GM10248 (cell line): ENCODE measurements at regions of chr7 and their contacts with region 1.

Region 1: DNA sequence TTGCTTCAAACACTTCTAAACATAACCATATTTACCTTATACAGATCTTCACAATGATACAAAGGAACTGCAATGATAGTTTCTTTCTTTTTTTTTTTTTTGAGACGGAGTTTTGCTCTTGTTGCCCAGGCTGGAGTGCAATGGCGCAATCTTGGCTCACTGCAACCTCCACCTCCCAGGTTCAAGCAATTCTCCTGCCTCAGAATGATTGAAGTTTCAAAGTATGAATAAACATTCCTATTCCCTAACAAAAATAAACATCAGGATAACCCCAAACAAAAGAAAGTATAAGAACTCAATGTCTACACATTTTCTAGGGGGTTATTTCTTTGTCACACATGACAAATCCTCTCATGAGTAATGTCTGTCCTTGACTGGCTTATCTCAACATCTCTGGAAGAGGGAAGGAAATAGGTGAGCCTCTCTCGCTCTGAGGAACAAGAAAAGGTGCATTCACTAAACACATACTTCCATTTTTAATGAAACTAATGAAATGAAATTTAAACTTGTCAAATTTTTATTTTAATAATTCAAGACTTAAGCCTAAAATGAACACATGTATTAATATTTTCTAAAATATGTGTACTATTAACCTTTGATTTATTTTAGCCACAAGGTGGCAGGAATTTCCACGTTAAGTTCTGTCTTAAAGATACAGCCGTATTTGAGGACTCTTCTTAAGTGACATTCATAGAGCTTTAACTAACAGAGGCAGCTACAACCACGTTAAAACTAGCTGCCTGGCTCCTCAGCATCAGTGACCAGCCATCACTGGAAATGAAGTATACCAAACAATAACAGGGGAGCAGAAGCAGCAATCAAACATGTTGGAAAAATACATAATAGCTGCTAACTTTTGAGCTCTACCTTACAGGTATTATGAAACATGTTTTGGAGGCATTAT is 58.3 kb downstream of the MALSU1 start:
- DNase-seq: peak; percentile 36
- CTCF ChIP-seq: peak; percentile 47

Region 2: DNA sequence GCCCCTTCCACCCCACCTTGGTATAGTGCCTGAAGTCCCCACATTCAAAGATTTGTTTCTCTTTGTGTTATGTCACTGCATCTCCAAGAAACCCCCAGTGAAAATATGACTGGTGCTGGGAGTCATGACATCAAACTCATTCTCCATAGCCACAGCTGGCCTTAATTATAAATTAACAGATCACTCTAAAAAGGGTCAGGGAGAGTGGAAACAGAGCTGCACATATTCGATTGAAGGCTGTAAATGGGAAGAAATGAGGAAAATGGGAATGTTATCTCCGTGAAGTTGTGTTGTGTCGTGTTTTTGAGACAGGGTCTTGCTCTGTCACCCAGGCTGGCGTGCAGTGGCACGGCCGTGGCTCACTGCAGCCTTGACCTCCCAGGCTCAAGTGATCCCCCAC is 199.8 kb before region 1 on chr7:
- CTCF ChIA-PET with region 1: no interaction called
- POLR2A ChIA-PET with region 1: no interaction called
- DNase-seq: no peak
- CTCF ChIP-seq: no peak

Region 3: DNA sequence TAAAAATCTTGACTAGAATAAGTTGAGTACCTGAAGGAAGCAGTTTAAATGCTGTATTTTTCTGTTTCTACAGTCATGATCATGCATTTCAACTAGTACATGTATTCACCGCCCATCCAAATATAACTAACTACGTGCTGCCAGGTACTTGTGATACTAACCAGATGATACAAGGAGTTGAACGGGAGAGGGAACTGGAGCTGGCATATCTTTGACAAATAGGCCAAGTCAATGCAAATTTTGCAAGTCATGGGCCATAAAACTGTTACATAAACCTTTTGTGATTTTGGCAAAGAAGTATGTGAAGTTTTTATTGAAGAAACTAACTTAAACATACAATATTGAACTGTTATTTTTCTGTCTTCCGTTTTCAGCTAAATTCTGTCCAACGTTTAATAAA is 161.1 kb before region 1 on chr7:
- CTCF ChIA-PET with region 1: no interaction called
- POLR2A ChIA-PET with region 1: no interaction called
- DNase-seq: no peak
- CTCF ChIP-seq: no peak

Region 4: DNA sequence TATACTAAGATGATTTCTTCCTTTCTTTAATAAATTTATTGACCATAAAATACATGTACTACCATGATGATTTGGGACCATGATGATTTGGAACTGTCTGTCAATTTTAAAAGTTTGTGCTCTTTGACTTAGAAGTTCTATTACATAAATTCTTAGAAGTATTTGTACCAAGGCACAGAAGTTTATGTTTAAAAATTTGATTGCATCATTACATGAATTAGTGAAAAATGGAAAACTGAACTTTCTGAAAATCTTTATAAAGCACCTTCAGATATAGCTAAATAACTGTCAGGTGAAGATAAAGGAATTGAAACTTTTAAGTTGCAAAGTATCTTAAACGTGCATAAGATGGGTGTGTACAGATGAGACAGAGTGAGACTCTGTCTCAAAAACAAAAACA is 26.3 kb before region 1 on chr7:
- CTCF ChIA-PET with region 1: no interaction called
- POLR2A ChIA-PET with region 1: no interaction called
- DNase-seq: no peak
- CTCF ChIP-seq: no peak

Region 5: DNA sequence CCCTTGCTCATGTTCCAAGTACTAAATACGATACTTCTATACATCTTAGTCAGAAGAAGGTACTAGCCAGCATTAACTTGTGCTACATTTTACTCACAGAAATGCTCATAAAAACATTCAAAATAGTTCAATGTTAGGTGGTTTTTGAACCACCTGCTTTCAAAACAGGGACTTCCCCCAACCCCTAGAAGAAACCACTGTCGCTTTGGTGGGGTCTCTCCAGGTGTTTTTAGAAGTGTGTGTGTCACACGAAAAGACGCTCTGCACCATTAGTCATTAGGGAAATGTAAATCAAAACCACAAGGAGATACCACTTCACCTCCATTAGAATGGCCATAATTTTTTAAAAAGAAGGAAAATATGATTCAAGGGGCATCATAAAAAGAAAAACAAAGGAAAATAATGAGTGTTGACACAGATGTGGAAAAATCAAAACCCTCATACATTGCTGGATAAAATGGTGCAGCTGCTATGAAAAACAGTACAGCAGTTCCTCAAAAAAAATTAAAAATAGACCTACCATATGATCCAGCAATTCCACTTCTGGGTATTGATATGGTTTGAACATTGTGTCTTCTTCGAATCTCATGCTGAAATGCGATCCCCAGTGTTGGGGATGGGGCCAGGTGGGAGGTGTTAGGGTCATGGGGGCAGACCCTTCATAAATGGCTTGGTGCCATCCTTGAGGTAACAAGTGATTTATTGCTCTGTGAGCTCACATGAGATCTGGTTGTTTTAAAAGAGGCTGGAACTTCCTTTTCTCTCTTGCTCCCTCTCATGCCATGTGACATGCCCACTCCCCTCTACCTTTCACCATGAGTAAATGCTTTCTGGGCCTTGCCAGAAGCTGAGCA is 15.9 kb after region 1 on chr7:
- CTCF ChIA-PET with region 1: interaction called, 18 read pairs
- POLR2A ChIA-PET with region 1: no interaction called
- DNase-seq: peak; percentile 67
- CTCF ChIP-seq: no peak

Region 6: DNA sequence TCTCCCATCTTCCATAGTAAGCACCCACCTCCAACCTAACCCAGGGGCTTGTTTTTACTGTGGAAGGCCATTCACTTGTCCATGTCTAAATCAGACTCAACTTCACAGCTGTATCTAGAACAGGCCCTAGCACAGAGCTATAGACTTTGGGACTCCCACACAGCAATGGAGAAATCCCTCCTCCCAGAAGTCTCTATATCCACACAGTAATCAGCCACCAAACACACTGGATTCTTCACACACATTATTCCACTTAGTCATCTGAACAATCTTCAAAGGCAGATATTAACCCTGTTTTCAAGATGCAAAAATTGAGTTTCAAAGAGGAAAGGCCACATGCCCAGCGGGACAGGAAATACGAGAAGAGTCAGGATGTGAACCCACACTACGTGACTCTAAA is 23.5 kb after region 1 on chr7:
- CTCF ChIA-PET with region 1: interaction called, 18 read pairs
- POLR2A ChIA-PET with region 1: no interaction called
- DNase-seq: no peak
- CTCF ChIP-seq: no peak

Region 7: GRCh38 chr7:23431702-23432199 is 74.3 kb after region 1 on chr7:
- CTCF ChIA-PET with region 1: interaction called, 11 read pairs
- POLR2A ChIA-PET with region 1: no interaction called
- DNase-seq: no peak
- CTCF ChIP-seq: no peak

Region 8: GRCh38 chr7:23546897-23547572 is 189.6 kb after region 1 on chr7:
- CTCF ChIA-PET with region 1: interaction called, 11 read pairs
- POLR2A ChIA-PET with region 1: no interaction called
- DNase-seq: peak; percentile 82
- CTCF ChIP-seq: peak; percentile 91